ENCODE measurements at regions of chr1 and their contacts with region 1.

Region 1: DNA sequence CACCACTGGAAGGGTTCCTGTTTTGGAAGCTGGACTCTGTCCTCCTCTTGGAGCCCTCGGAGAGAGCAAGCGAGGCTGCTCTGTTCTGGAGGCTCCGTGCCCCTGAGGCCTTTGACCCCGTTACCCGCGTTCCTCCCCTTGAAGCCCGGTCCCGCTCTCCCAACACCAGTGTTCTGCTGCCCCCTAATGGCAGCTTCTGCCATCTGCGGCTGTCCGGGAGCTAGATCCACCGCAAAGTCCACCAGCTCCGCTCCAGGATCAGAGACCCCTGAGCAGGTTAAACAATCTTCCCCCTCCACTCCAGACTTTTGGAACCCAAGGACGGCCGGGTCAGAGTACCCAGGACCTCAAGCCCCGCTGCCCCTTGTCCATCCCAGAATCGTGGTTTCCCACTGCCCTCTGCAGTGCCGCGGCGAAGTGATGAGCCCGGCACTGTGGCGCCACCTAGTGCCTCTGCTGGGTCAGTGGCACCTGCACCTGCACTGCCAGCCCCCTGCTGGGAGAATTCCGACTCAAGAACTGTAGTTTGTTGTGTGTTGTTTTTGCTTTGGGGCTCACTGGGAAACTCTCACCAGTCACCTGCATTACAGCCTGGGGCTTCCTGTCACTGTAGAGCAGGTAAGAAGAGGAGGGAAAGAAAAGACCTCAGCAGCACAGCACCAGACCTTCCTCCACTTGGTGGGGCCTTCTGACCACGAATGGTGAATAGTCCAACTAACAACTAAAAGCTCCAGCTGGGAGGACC is 63.5 kb upstream of the NFASC start:
- DNase-seq: peak; percentile 91
- ATAC-seq: peak; percentile 95
- H3K4me3 Mint-ChIP-seq: peak overlapping the region; percentile 84
- H3K27ac Mint-ChIP-seq: peak overlapping the region; percentile 79
- H3K4me1 Mint-ChIP-seq: peaks cover 19% of the 10 kb centered on the region
- H3K27me3 Mint-ChIP-seq: peaks cover 6% of the 10 kb centered on the region

Region 2: GRCh38 chr1:204431310-204432165 is 375.6 kb before region 1 on chr1:
- CTCF ChIA-PET with region 1: interaction called, 23 read pairs
- DNase-seq: peak; percentile 85
- ATAC-seq: peak; percentile 88
- H3K4me3 Mint-ChIP-seq: no peak overlapping the region
- H3K27ac Mint-ChIP-seq: peak overlapping the region; percentile 20
- H3K4me1 Mint-ChIP-seq: no peaks in the 10 kb centered on the region
- H3K27me3 Mint-ChIP-seq: no peaks in the 10 kb centered on the region

Region 3: GRCh38 chr1:204506961-204507387 is 300.1 kb before region 1 on chr1:
- CTCF ChIA-PET with region 1: interaction called, 28 read pairs
- DNase-seq: peak; percentile 93
- ATAC-seq: peak; percentile 79
- H3K4me3 Mint-ChIP-seq: peak overlapping the region; percentile 85
- H3K27ac Mint-ChIP-seq: peak overlapping the region; percentile 100
- H3K4me1 Mint-ChIP-seq: peaks cover 31% of the 10 kb centered on the region
- H3K27me3 Mint-ChIP-seq: no peaks in the 10 kb centered on the region

Region 4: GRCh38 chr1:204560590-204561150 is 246.4 kb before region 1 on chr1:
- CTCF ChIA-PET with region 1: interaction called, 121 read pairs
- DNase-seq: no peak
- ATAC-seq: no peak
- H3K4me3 Mint-ChIP-seq: no peak overlapping the region
- H3K27ac Mint-ChIP-seq: no peak overlapping the region
- H3K4me1 Mint-ChIP-seq: peaks cover 40% of the 10 kb centered on the region
- H3K27me3 Mint-ChIP-seq: no peaks in the 10 kb centered on the region

Region 5: DNA sequence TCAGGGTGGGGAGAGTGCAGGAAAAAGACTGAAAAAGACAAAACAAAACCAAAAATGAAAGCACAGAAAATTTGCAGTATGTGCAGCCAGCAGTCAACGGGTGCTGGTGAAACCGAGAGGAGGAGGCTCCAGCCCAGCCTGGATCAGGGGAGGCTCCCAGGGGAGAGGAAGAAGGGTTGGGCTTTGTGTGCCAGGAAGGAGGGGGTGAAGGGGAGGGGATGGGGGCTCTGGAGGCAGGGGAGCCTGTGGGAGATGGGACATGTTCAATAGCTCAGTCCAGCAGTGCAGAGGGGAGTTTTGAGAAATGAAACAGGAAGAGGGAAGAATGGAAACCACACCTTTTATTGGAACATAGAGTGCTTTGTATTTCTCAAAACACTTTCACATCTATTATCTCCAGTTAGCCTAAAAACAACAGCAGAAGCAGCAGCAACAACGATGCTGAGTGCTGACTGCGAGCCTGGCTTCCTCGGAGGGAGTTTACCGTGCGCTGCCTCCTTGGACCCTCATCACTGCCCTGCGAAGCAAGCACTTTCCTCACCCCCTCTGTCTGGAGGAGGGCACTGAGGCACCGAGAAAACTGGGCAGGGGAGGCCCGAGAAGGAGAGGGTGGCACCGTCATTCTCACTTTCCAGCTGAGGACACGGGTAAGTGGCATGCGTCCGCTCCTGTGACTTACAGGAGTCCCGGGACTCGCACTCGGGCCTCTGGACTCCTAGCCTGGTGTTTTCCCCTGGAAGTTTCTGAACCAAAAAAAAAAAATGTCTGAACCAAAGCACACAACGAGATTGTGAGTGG is 228.0 kb before region 1 on chr1:
- CTCF ChIA-PET with region 1: interaction called, 53 read pairs
- DNase-seq: peak; percentile 68
- ATAC-seq: peak; percentile 79
- H3K4me3 Mint-ChIP-seq: peak overlapping the region; percentile 69
- H3K27ac Mint-ChIP-seq: peak overlapping the region; percentile 86
- H3K4me1 Mint-ChIP-seq: peaks cover 23% of the 10 kb centered on the region
- H3K27me3 Mint-ChIP-seq: no peaks in the 10 kb centered on the region

Region 6: DNA sequence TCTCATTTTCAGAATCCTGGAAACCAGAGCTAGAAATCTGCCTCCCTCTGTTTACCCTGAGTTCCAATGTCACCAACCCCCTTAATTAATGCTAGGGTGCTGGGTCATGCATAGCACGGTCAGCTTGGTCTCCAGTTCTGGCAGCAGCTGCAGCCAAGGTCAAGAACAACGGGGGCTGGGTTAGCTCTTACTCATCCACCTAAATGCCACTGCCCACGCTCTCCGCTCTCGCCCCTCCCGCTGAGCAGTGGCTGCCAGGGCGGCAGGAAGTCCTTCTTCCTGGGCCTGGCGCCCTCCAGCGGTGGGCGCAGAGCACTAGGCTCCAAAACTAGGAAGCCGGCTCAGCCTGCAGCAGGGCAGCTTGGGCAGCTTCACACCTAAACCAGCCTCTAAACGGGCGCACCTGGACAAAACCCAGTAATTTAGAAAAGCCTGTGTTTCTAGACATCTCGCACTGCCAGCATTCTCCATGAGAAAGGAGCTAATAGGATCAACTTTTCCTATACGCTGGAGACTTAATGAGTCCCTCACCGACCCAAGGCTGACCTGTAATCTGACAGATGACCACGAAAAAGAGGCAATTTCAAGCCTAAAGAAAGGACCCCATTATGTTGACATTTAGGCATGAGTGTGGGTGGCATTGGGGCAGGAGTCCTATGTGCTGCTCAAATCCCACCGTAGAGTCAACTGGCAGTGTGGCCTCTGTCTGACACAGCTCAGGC is 43.2 kb before region 1 on chr1:
- CTCF ChIA-PET with region 1: interaction called, 24 read pairs
- DNase-seq: peak; percentile 83
- ATAC-seq: peak; percentile 98
- H3K4me3 Mint-ChIP-seq: no peak overlapping the region
- H3K27ac Mint-ChIP-seq: no peak overlapping the region
- H3K4me1 Mint-ChIP-seq: peaks cover 5% of the 10 kb centered on the region
- H3K27me3 Mint-ChIP-seq: peaks cover 48% of the 10 kb centered on the region

Region 7: DNA sequence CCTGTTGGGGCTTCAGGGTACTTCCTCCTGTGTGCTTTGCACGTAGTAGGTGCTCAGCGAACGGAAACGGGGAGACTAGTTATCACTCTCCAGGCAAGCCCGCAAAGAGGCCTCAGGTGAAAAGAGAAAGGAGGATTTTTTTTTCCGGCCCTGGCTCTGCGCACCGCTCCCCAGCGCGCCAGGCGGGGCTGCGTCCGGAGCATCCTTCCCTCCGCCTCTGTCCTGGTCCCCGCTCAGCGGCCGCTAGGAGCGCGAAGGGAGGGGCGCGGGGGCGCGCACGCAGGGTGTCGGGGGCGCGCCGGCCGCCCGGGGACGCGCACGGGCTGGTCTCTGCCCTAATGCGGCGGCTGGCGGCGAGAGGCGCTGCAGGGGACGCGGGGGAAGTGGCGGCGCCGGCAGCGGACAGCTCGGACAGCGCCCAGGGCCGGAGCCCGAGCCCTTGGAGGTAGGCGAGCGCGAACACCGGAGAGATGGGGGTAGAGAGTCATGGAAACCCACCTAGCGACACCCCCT is 21.3 kb after region 1 on chr1:
- CTCF ChIA-PET with region 1: interaction called, 35 read pairs
- DNase-seq: peak; percentile 57
- ATAC-seq: peak; percentile 75
- H3K4me3 Mint-ChIP-seq: peak overlapping the region; percentile 16
- H3K27ac Mint-ChIP-seq: no peak overlapping the region
- H3K4me1 Mint-ChIP-seq: peaks cover 3% of the 10 kb centered on the region
- H3K27me3 Mint-ChIP-seq: peaks cover 52% of the 10 kb centered on the region

Region 8: GRCh38 chr1:205048382-205048781 is 241.3 kb after region 1 on chr1:
- CTCF ChIA-PET with region 1: no interaction called
- DNase-seq: no peak
- ATAC-seq: no peak
- H3K4me3 Mint-ChIP-seq: no peak overlapping the region
- H3K27ac Mint-ChIP-seq: no peak overlapping the region
- H3K4me1 Mint-ChIP-seq: no peaks in the 10 kb centered on the region
- H3K27me3 Mint-ChIP-seq: peaks cover 33% of the 10 kb centered on the region

Measured in activated CD8-positive, alpha-beta memory T cell treated with anti-CD3 and anti-CD28 coated beads, Interleukin-2, amount 10 ng/mL, durations not matched to agents 7 days and 5 days (primary cell).